RWPE1 (cell line): ENCODE measurements at regions of chr1 and their contacts with region 1.

Region 1: GRCh38 chr1:110460253-110461220 is 9.6 kb downstream of the PROK1 start:
- DNase-seq: peak; percentile 80
- H3K27ac ChIP-seq: no peak overlapping the region
- CTCF ChIP-seq: peak; percentile 92

Region 2: DNA sequence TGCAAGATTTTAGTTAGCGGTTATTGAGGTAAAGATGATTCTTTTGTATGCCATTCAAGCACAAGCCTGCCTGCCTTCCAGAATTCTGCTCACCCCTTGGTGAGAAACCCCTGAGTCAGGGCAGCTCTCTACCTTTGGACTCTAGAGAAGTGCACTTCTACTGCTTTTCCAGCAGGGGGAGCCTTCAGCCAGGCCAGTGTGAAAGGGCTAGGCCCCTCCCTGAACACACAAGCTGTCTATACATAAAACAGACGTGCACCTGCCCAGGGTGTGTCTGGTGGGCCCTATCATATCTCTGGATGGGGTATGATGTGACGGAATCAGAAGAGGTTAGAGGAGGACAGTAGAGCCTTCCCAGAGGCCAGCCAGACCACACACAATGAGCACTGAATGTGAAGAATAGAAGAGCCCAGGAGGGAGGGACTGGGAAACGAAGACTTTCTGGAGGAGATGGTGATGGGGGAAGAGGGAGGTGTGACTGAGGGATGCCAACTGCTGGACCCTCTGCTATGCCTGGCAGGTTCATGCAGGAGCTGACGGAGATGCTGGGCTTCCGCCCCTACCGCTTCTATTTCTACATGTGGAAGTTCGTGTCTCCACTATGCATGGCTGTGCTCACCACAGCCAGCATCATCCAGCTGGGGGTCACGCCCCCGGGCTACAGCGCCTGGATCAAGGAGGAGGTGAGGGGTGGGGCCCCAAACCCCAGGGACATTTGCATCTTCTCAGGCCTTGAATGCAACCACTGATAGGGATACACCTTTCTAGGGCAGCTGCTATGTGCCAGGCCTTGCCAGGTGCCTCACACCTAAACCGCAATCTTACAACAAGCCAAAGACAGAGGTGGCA is 263.4 kb before region 1 on chr1:
- CTCF ChIA-PET with region 1: interaction called, 33 read pairs
- POLR2A ChIA-PET with region 1: no interaction called
- DNase-seq: peak; percentile 80
- H3K27ac ChIP-seq: no peak overlapping the region
- CTCF ChIP-seq: peak; percentile 92

Region 3: DNA sequence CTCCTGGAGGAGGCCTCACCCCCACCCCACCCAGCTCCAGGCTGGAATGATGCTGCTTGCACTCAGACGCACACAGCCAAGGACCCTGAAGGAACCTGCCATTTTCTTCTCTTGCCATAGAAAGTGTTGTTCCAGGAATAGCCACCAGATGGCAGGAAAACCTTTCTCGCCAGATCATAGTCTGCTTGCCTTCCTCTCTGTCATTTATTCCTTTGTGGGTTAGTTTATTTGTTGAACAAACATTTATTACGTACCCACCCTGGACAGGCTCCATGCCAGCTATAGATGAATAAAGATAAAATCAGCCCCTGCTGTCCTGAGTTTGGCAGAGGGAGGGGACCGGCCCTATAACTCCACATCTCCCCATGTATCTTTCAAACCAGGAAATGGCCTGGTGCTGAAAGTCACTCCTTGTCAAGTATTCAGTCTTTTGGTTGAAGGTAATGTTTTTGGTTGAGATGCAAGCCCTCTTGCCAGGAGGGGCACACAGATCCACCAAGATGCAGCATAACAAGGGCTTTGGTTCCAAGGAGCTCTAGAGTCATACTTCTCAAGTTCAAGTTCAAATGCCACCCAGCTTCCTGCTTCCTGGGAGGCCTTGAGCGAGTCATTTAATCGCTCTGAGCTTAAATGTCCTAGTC is 257.4 kb before region 1 on chr1:
- CTCF ChIA-PET with region 1: interaction called, 33 read pairs
- POLR2A ChIA-PET with region 1: no interaction called
- DNase-seq: peak; percentile 45
- H3K27ac ChIP-seq: no peak overlapping the region
- CTCF ChIP-seq: peak; percentile 84

Region 4: DNA sequence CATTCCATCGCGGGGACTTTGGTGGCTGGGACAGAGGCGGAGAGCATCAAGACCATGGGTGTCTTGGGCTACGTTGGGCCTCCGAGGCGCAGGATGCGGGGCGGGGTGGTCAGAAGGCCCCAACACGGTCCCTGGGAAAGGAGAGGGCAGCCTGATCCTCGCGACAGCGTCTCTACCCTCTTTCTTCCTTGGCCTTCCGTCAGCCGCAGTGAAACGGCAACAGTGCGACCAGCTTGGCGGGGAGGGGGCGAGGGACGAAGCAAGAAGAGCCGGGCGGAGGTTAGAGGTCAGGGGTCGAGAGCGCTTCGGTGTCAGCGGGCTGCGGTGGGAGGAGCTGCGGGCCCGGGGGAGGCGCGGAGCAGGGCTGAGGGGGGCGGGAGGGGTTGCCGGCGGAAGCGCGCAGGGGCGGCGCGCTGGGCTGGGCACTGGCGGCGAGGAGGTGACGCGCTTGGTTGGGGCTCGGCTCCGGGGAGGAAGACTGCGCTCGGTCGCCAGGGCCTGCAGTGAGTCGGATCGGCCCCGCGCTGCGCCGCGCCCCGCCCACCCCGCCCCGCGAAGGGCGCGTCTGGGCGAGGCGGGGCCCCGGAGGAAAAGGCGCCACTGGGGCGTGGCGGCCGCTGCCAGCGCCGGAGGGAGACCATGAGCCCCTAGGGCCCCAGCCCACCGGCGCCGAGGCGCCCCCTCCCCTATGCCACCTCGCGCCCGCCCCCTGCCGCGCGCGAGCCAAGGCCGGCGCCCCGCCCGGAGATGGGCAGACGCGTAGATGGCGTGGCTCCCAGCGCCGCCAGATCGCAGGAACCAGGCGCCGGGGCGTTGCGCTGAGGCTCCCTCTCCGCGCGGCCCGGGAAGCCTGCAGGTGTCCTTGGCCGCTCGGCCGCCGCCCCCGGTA is 250.6 kb before region 1 on chr1 and contains the start of gene KCNC4:
- CTCF ChIA-PET with region 1: interaction called, 22 read pairs
- POLR2A ChIA-PET with region 1: no interaction called
- DNase-seq: peak; percentile 77
- H3K27ac ChIP-seq: peak within 1 kb of the TSS; percentile 69
- CTCF ChIP-seq: no peak

Region 5: DNA sequence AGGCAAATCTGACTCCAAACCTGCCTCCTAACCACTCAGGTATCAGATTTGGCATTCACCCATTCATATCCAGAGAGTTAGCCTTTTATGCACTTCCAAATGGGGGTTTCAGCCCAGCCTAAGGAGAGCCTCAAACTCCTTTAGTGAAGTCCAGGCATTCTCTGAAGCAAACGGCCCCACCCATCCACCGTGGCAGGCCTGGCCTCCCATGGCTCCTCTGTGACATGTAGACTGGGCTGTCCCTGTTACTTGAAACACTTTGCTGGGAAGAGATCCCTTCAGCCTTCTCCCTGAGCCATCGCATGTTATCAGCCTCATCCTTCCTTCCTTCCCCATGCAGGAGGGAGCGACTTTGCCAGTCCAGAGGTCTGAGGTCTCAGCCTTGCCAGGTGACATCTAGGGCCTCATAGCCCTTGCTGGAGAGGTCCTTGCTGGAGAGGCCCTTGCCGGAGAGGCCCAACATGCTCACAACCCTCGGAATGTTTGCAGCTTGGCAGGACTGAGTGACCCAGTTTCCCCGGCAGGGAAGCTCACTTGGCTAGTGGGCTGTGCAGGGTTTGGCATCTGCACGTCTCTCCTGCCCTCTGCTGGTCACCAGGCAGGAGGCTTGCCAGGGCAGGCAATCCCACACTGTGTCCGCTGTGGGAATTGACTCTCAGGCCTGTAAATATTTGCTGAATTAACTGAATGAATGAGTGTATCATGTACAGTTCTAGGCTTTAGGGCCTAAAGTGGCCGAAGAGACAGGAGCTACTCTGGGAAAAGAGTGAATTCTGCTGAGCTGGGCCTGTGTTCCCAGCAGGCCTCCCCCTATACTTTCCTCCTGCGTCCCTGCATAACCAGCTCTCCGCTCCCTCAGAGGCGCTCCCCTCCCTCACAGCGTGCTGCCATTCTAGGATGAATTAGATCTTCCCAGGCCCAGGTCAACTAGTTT is 148.1 kb before region 1 on chr1:
- CTCF ChIA-PET with region 1: interaction called, 14 read pairs
- POLR2A ChIA-PET with region 1: no interaction called
- DNase-seq: peak; percentile 63
- H3K27ac ChIP-seq: no peak overlapping the region
- CTCF ChIP-seq: peak; percentile 80

Region 6: DNA sequence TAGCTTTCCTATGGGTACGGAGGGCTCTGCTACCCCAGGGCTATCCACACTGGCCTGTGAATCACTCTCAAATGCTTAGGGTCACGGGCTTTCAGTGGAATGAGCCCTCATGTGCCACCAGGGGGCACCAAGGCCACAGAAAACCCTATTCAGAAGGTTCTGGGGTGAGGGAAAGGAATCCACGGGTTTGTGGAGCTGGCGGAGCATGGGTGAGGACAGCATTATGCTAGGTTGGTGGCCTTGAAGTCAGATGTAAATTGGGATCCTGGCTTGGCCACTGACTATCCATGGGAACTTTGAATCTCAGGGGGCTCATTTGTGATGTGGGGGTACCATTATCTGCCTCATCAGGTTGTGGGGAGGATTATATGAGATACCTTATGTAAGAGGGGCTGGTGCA is 48.0 kb before region 1 on chr1:
- CTCF ChIA-PET with region 1: interaction called, 69 read pairs
- POLR2A ChIA-PET with region 1: interaction called, 3 read pairs
- DNase-seq: peak; percentile 80
- H3K27ac ChIP-seq: no peak overlapping the region
- CTCF ChIP-seq: peak; percentile 76

Region 7: GRCh38 chr1:110440877-110441276 is 19.7 kb before region 1 on chr1:
- CTCF ChIA-PET with region 1: interaction called, 13 read pairs
- POLR2A ChIA-PET with region 1: no interaction called
- DNase-seq: no peak
- H3K27ac ChIP-seq: peak overlapping the region; percentile 18; the same call in 1 of the 2 replicates
- CTCF ChIP-seq: no peak